ENCODE measurements at regions of chr6 and their contacts with region 1.

Region 1: DNA sequence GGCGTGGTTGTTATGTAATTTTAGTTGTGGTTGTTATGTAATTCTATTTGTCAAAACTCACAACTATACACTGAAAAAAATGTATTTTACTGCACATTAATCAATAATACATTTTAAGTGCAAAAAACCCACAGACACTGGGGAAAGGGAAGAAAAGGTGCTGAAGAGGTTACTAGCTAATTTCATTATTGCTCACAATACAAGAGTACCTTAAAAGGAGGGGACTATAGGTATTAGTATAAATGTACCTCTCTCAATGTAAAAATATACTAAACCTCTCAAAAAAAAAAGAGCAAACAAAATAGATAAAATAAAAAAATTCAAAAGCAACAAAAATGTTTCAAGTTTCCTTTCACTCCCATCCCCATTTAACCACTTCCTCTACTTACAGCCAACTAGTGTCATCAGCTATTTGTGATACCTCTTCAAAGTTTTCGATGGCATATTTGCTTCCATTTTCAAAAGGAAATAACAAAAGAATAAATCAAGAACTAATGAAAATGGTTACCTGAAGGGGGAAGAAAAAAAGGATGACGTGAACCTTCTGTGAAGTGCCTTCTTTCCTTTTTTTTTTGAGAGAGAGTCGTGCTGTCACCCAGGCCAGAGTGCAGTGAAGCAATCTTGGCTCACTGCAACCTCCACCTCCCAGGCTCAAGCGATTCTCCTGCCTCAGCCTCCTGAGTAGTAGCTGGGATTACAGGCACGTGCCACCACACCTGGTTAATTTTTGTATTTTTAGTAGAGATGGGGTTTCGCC is 30.2 kb downstream of the RANBP9 start:
- DNase-seq: peak; percentile 40
- ATAC-seq: peak; percentile 83
- H3K4me3 ChIP-seq: peak overlapping the region; percentile 8; the same call in 1 of the 2 replicates
- H3K27ac ChIP-seq: peak overlapping the region; percentile 62
- H3K4me1 ChIP-seq: peaks cover 12% of the 10 kb centered on the region
- H3K27me3 ChIP-seq: no peaks in the 10 kb centered on the region
- CTCF ChIP-seq: no peak
- EP300 ChIP-seq: no peak
- POLR2A ChIP-seq: no peak
- RAD21 ChIP-seq: no peak

Region 2: DNA sequence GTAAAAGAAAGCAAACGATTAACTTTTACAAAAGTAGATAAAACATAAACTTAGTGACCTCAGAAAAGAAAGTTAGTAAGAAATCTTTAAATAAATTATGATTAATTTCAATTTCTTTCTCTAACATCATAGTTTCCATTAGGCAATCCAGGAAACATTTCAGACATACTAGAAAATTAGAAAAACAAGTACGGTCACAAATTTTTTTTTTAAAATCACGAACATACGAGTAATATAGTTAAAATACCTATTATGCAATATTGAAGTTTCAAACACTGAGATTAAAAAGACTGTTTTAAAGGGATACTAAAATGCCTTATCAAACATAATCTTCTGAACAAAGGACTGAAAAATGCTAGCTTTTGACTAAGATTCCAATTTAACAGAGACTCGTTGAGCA is 40.2 kb before region 1 on chr6:
- CTCF ChIA-PET with region 1: no interaction called
- POLR2A ChIA-PET with region 1: no interaction called
- RAD21 ChIA-PET with region 1: no interaction called
- SMC1A ChIA-PET with region 1: no interaction called
- in situ Hi-C with region 1: no loop called
- intact Hi-C with region 1: no loop called
- DNase-seq: no peak
- ATAC-seq: no peak
- H3K4me3 ChIP-seq: no peak overlapping the region
- H3K27ac ChIP-seq: no peak overlapping the region
- H3K4me1 ChIP-seq: no peaks in the 10 kb centered on the region
- H3K27me3 ChIP-seq: no peaks in the 10 kb centered on the region
- CTCF ChIP-seq: no peak
- EP300 ChIP-seq: no peak
- POLR2A ChIP-seq: no peak
- RAD21 ChIP-seq: no peak

Region 3: DNA sequence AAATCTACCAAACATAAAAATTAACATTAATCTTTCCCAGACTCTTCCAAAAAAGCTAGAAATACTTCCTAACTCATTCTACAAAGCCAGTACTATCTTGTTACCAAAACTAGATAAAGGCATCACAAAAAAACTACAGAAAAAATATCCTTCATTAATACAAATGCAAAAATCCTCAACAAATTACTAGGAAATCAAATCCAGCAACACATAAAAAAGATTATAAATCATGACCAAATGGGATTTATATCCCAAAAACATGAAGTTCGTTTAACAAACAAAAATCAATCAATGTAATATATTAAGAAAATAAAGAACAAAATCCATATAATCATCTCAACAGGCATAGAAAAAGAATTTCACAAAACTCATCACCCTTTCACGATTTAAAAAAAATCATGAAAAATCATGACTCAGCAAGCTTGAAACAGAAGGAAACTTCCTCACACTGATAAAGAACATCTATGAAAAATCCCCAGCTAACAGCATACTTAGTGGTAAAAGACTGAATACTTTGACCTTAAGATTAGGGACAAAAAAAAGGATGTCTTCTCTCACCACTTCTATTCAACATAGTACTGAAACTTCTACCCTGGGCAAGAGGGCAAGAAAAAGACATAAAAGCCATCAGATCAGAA is 13.1 kb before region 1 on chr6:
- CTCF ChIA-PET with region 1: interaction called, 5 read pairs
- POLR2A ChIA-PET with region 1: interaction called, 3 read pairs
- RAD21 ChIA-PET with region 1: interaction called, 3 read pairs
- SMC1A ChIA-PET with region 1: interaction called, 32 read pairs
- in situ Hi-C with region 1: no loop called
- intact Hi-C with region 1: no loop called
- DNase-seq: peak; percentile 49
- ATAC-seq: peak; percentile 89
- H3K4me3 ChIP-seq: no peak overlapping the region
- H3K27ac ChIP-seq: peak overlapping the region; percentile 52
- H3K4me1 ChIP-seq: 0 out of 2 replicates have a peak, but pooled peaks cover 3% of the 10 kb centered on the region
- H3K27me3 ChIP-seq: no peaks in the 10 kb centered on the region
- CTCF ChIP-seq: no peak
- EP300 ChIP-seq: no peak
- POLR2A ChIP-seq: no peak
- RAD21 ChIP-seq: no peak

Measured in GM12878 (cell line).